ENCODE measurements at regions of chr22 and their contacts with region 1.

Region 1: DNA sequence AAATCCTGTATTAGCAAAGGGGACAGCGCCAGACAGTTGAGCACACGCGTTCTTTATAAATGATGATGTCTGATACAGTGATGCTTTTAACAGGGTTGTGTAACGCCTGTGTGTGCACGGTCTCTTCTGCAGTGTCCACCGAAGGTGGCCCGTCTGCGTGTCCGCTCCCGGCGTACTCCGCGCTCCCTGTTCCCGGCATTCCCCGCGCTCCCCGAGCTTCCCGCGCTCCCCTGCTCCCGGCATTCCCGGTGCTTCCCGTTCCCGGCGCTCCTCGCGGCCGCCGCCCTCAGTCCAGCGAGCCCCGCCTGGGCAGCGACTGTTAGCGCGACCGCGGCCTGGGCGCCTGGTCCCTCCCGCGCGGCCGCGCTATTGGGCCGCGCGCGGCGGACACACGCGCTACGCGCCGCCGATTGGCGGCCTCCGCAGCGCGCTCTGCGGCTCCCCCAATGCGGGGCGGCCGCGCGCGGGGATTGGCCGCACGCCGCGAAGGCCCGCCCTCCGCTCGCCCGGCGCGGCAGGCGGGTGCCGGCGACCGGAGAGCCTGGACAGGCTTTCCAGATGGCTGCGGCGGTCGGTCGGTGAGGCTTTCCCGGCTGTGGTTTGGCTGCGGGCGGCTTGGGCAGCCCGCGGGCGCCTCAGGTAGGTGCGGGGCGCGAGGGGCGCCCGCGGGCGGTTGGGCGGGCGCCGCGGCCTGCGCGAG is at the start of gene DGCR8:
- DNase-seq: peak; percentile 95
- ATAC-seq: peak; percentile 96 to 98 (median 97)
- H3K4me3 ChIP-seq: peak within 1 kb of the TSS; percentile 68 to 99 (median 88)
- H3K27ac ChIP-seq: peak within 1 kb of the TSS; percentile 88 to 97 (median 94)
- H3K4me1 ChIP-seq: peaks cover 26 to 53% (median 47%) of the 10 kb centered on the region in 9 donors
- H3K27me3 ChIP-seq: no peaks in the 10 kb centered on the region
- CTCF ChIP-seq: no peak
- total RNA-seq, gene DGCR8: 11.4 to 20.0 (median 14.0) TPM

Region 2: GRCh38 chr22:20016734-20017621 is 62.9 kb before region 1 on chr22 and contains the start of gene ARVCF:
- intact Hi-C with region 1: loop called in 4 of 10 experiments (anchors 2 to 5 kb)
- DNase-seq: peak; percentile 94
- ATAC-seq: peak; percentile 39 to 75 (median 72)
- H3K4me3 ChIP-seq: peak within 1 kb of the TSS; percentile 51 to 96 (median 79)
- H3K27ac ChIP-seq: peak within 1 kb of the TSS in 6 of 10 donors; percentile 10 to 62 (median 36)
- H3K4me1 ChIP-seq: peaks cover 14 to 52% (median 39%) of the 10 kb centered on the region in 9 donors
- H3K27me3 ChIP-seq: peaks cover 0 to 26% (median 0%) of the 10 kb centered on the region in 7 donors
- CTCF ChIP-seq: peak in 8 of 9 donors; percentile 12 to 48 (median 28)
- total RNA-seq, gene ARVCF: 22.2 to 53.5 (median 32.1) TPM

Region 3: GRCh38 chr22:20027966-20028854 is 51.7 kb before region 1 on chr22:
- intact Hi-C with region 1: loop called in 5 of 10 experiments (anchors 5 kb)
- DNase-seq: no peak
- ATAC-seq: no peak
- H3K4me3 ChIP-seq: no peak overlapping the region
- H3K27ac ChIP-seq: peak overlapping the region in 6 of 10 donors; percentile 37 to 71 (median 48)
- H3K4me1 ChIP-seq: peaks cover 46 to 96% (median 72%) of the 10 kb centered on the region in 9 donors
- H3K27me3 ChIP-seq: no peaks in the 10 kb centered on the region
- CTCF ChIP-seq: peak in 3 of 9 donors; percentile 23 to 24 (median 24)

Region 4: DNA sequence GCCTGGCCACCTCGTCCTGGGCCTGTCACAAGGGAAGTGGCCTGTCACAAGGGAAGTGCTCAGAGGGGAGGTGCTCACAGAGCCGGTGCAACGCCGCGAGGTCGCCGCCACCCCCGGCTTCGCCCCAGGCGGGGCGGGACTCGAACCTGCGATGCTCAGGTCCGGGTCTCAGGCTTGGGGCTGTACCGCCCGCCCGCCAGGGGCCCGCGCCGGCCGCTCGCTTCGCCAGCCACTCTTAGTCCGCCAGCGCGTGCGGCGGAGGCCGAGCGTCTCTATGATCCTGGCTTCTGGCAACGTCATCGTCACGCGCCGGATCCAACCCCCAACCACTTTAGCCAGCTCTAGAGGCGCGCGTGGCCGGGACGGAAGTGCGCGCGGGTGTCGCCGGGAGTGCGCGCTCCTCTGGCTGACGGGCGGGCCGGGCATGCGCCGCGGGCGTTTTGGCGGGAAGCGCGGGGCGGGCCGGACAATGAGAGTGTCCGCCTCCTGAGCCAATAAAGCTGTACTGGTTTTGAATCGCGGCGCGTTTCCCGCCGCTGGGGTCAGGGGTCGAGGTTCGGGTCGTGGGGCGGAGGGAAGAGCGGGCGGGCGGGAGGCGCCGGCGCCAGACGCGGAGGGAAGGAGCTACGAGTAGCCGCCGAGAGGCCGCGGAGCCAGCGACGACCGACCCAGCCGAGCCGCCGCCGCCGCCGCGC is 37.2 kb after region 1 on chr22 and contains the start of gene TRMT2A:
- intact Hi-C with region 1: loop called in 3 of 10 experiments (anchors 2 to 5 kb)
- DNase-seq: peak; percentile 97
- ATAC-seq: peak; percentile 91 to 96 (median 94)
- H3K4me3 ChIP-seq: peak within 1 kb of the TSS; percentile 57 to 99 (median 82)
- H3K27ac ChIP-seq: peak within 1 kb of the TSS; percentile 26 to 93 (median 89)
- H3K4me1 ChIP-seq: peaks cover 19 to 57% (median 37%) of the 10 kb centered on the region in 9 donors
- H3K27me3 ChIP-seq: no peaks in the 10 kb centered on the region
- CTCF ChIP-seq: peak in 5 of 9 donors; percentile 20 to 49 (median 36)
- total RNA-seq, gene TRMT2A: 18.4 to 29.6 (median 25.8) TPM

Region 5: DNA sequence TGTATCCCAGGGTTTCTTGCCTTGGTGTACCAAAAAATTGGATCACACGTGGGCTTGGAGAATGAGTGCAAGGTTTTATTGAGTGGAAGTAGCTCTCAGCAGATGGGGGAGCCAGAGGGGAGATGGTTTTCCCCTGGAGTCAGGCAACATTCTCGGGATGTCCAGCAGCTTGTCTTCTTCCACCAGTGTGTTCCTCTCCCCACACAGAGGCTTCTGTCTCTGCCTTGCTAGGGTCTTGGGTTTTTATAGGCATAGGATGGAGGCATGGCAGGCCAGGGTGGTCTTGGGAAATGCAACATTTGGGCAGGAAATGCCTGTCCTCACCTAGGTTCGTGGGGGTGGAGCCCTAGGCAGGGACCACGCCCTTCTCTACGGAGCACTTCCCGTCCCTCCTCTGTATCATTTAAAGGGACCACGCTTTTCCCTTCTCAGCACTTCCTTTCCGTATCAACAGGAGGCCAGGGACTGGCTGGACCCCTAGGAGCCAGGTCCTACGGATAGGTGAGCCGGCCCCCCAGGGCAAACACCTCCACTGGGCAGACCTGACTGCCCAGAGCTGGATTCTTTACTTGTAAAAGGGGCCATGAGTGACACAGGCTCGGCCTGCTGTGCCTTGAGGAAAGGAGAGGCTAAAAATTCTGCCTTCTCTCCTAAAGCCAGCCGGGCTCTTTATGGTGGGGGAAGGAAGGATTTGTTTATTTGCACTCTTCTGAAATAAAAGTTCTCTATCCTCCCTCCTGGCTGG is 126.2 kb after region 1 on chr22:
- intact Hi-C with region 1: loop called in 1 of 10 experiments (anchors 5 kb)
- DNase-seq: peak; percentile 62 to 81
- ATAC-seq: peak; percentile 40 to 89 (median 82)
- H3K4me3 ChIP-seq: peak overlapping the region; percentile 38 to 76 (median 66)
- H3K27ac ChIP-seq: peak overlapping the region; percentile 72 to 96 (median 86)
- H3K4me1 ChIP-seq: peaks cover 33 to 59% (median 44%) of the 10 kb centered on the region in 9 donors
- H3K27me3 ChIP-seq: no peaks in the 10 kb centered on the region
- CTCF ChIP-seq: peak in 4 of 9 donors; percentile 11 to 28 (median 18)

Measured in heart right ventricle (tissue), 16 donors.